ENCODE measurements at regions of chr12 and their contacts with region 1.

Region 1: DNA sequence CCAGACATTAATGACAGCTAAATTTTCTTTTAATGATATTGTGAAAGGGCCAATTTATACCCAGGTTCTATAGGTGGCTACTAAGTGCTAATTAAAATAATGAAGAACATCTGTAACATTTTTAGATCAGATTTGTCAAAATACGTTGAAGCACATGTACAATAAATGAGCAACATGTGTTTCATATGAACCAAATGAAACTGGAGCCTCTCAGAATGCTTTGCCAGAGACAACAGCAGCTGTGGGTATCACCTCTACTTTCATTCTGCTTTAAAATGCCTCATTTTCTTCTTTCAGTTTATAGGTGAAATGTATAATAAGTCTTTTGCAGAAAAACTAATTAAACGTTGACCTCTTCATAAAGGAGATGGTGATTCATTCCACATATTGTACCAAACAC is 26.1 kb upstream of the MYF6 start:
- DNase-seq: no peak
- ATAC-seq: peak in 3 of 4 donors; percentile 40 to 68 (median 61)
- H3K4me3 ChIP-seq: peak overlapping the region; percentile 60
- H3K27ac ChIP-seq: peak overlapping the region; percentile 64
- H3K4me1 ChIP-seq: peaks cover 45% of the 10 kb centered on the region
- H3K27me3 ChIP-seq: no peaks in the 10 kb centered on the region
- CTCF ChIP-seq: no peak

Region 2: GRCh38 chr12:80607361-80608135 is 73.7 kb before region 1 on chr12:
- intact Hi-C with region 1: no loop called
- DNase-seq: no peak
- ATAC-seq: no peak
- H3K4me3 ChIP-seq: no peak overlapping the region
- H3K27ac ChIP-seq: no peak overlapping the region
- H3K4me1 ChIP-seq: no peaks in the 10 kb centered on the region
- H3K27me3 ChIP-seq: no peaks in the 10 kb centered on the region
- CTCF ChIP-seq: peak; percentile 27

Region 3: DNA sequence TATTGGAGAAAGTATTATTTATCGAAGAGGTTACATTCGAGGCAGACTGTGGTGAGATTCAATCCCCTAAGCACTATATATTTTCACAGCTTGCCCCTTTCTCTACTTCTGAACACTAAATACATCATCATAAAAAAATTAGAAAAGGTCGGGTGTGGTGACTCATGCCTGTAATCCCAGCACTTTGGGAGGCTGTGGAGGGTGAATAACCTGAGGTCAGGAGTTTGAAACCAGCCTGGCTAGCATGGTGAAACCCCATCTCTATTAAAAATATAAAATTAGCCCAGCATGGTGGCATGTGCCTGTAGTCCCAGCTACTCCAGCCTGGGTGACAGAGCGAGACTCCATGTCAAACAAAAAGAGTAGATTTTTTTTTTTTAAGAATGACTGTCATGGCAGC is 44.5 kb before region 1 on chr12:
- intact Hi-C with region 1: loop called in 1 of 2 experiments (anchors 5 kb)
- DNase-seq: peak in 1 of 2 donors; percentile 50
- ATAC-seq: peak; percentile 53 to 78 (median 72)
- H3K4me3 ChIP-seq: peak overlapping the region; percentile 6
- H3K27ac ChIP-seq: peak overlapping the region; percentile 79
- H3K4me1 ChIP-seq: peaks cover 37% of the 10 kb centered on the region
- H3K27me3 ChIP-seq: no peaks in the 10 kb centered on the region
- CTCF ChIP-seq: no peak

Region 4: GRCh38 chr12:80701388-80701787 is 20.1 kb after region 1 on chr12:
- intact Hi-C with region 1: loop called in 1 of 2 experiments (anchors 2 kb)
- DNase-seq: no peak
- ATAC-seq: peak; percentile 18 to 65 (median 50)
- H3K4me3 ChIP-seq: peak overlapping the region; percentile 76
- H3K27ac ChIP-seq: peak overlapping the region; percentile 93
- H3K4me1 ChIP-seq: peaks cover 10% of the 10 kb centered on the region
- H3K27me3 ChIP-seq: no peaks in the 10 kb centered on the region
- CTCF ChIP-seq: no peak

Region 5: GRCh38 chr12:80807640-80808288 is 126.5 kb after region 1 on chr12:
- intact Hi-C with region 1: no loop called
- DNase-seq: no peak
- ATAC-seq: no peak
- H3K4me3 ChIP-seq: no peak overlapping the region
- H3K27ac ChIP-seq: no peak overlapping the region
- H3K4me1 ChIP-seq: no peaks in the 10 kb centered on the region
- H3K27me3 ChIP-seq: no peaks in the 10 kb centered on the region
- CTCF ChIP-seq: no peak

Measured in psoas muscle (tissue), 8 donors.